ENCODE measurements at regions of chr1 and their contacts with region 1.

Region 1: DNA sequence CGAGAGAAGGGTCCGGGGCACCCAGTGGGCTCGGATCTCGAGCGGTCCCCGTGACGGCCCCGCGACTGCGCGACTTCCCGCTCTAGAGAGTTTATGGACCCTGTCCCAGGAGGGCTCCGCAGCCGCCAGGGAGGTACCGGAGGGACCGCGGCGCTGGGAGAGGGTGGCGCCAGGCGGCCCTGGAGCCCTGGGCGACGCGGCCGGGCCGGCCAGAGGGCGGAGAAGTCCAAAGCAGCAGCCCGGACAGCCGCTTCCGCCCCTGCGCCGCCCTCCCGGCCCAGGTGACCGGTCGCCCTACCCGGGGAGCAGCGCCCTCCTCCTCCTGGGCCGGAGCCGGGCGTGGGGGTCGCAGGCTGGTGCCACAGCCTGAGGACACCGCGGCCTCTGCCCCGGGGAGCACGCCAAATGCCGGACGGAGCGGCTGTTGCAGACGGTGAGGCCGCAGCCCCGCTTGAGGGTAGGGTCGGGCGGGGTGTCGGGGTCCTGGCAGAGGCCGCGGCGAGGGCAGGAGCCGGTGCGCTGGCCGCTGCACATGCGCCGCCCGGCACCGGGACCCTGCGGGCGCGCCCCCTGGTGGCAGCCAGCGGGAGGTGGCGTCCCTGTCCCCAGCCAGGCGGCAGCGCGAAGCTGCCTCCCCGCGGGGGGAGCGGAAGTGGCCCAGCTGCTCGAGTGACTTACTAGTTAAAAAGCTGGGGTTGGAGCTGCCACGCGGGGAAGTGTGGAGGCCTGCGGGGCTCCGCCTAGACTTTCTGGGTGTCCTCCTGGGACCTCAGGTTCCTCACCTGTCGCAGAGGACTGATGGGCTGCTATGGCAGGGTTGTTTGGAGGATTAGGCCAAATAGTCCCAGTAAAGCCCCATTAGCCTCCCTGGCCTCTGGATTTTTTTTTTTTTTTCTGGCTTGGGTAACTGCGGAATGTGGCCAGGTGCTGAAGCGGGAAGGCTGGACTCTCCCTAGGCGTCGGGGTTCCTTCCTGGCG is 20.9 kb upstream of the ZNF678 start:
- DNase-seq: peak; percentile 37 to 93
- H3K4me3 ChIP-seq: peak overlapping the region; percentile 93 to 98
- H3K27ac ChIP-seq: peak overlapping the region; percentile 79 to 85
- H3K4me1 ChIP-seq: peaks cover 4 to 8% of the 10 kb centered on the region in 2 donors
- H3K27me3 ChIP-seq: no peaks in the 10 kb centered on the region
- CTCF ChIP-seq: peak; percentile 82 to 92 (median 82)

Region 2: DNA sequence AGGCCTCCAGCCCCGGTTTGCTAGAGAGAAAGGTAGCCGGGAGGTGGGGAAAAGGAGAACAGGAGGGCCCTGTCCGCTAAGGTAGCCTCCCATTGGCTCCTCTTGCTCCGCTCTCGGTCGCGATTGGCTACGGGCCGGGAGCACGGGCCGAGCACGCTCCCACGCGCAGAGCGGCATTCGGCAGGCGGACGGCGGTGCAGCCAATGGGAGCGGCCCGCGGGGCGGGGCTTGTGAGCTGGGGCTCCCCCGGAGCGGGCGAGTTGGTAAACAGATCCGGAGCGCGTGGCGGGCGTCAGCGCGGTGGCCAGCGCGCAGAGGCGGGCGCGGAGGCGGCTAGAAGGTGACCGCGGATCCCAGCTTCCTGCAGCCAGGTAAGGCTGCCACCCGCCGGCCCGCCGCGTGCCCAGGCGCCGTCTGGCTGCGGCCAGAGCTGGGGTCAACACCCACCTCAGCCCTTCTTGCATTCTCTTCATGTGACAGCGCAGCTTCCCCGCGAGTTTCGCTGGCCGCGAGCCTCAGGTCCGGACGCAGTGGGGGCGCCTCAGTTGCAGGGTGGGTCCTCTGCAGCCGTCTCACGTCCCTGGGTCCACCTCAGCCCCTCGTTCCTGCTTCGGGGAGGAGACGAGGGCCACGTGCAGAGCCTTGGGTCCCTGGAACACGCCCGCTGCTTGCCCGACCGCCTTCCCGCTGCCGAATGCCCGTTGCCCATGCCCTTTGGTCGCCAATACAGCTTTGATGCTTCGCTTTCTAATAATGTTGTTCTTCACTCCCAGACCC is 602.2 kb before region 1 on chr1 and contains the start of gene COQ8A:
- intact Hi-C with region 1: loop called (anchors 5 kb)
- DNase-seq: peak; percentile 96 to 99
- H3K4me3 ChIP-seq: peak within 1 kb of the TSS; percentile 91 to 93
- H3K27ac ChIP-seq: peak within 1 kb of the TSS; percentile 95 to 97
- H3K4me1 ChIP-seq: peaks cover 7 to 21% of the 10 kb centered on the region in 2 donors
- H3K27me3 ChIP-seq: no peaks in the 10 kb centered on the region
- CTCF ChIP-seq: no peak
- total RNA-seq, gene COQ8A: 42.4 TPM

Region 3: DNA sequence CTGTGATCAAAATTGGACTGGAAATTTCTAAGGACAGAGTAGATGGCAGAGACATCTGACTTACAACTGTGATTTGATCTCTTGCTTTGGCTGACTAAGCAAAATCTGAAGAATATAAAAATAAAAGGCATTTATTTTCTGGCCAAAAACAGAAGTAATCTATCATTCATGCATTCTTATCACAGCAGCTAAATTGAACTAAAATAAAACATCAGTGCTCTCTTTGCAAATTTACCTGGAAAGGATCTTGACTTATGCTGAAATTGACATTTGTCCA is 60.5 kb before region 1 on chr1:
- intact Hi-C with region 1: loop called (anchors 5 kb)
- DNase-seq: no peak
- H3K4me3 ChIP-seq: no peak overlapping the region
- H3K27ac ChIP-seq: no peak overlapping the region
- H3K4me1 ChIP-seq: no peaks in the 10 kb centered on the region
- H3K27me3 ChIP-seq: no peaks in the 10 kb centered on the region
- CTCF ChIP-seq: no peak

Region 4: DNA sequence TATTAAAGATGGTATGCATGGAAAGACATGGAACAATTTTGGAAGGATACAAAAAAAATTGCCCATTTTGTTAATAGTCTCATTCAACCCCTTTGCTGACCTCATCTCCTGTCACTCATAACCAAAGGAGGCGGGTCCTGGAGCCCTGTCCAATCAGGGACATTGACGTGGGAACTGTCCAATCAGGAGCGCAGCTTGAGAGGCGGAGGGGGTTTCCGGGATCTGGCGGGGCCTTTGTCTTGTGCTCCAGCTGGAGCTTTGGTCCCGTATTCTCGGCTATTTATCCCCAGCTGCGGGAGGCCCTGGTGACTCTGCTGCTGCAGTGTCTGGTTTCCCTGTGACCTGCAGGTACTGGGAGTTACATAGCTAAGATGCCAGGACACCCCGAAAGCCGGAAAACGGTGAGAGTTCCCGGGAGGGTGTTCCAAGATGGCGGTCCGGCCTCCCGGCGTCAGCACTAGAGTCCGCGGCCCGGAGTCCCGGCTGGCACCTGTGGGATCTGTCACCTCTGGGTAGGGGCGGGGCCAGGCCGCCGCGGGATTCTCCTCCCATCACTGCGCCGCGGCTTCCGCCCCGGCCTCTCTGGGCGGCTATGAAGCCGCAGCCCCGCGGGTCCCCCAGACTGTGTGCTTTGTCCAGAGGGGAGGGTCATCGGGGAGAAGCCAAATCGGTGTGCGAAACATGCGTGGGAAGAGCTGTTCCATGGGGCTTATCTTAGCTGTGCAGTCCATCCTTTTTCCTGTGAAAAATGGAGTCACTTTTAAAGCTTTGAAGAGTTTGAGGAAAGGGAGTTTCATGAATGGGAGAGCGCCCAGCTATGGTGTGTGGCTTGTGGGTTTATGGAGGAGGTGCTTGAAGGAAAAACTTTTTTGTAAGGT is 21.1 kb after region 1 on chr1 and contains the start of gene ZNF678:
- intact Hi-C with region 1: loop called (anchors 1 kb)
- DNase-seq: peak; percentile 78 to 95
- H3K4me3 ChIP-seq: peak within 1 kb of the TSS; percentile 65 to 71
- H3K27ac ChIP-seq: peak within 1 kb of the TSS; percentile 68 to 80
- H3K4me1 ChIP-seq: peaks cover 0 to 6% of the 10 kb centered on the region in 2 donors
- H3K27me3 ChIP-seq: no peaks in the 10 kb centered on the region
- CTCF ChIP-seq: no peak
- total RNA-seq, gene ZNF678: 0.75 TPM

Region 5: DNA sequence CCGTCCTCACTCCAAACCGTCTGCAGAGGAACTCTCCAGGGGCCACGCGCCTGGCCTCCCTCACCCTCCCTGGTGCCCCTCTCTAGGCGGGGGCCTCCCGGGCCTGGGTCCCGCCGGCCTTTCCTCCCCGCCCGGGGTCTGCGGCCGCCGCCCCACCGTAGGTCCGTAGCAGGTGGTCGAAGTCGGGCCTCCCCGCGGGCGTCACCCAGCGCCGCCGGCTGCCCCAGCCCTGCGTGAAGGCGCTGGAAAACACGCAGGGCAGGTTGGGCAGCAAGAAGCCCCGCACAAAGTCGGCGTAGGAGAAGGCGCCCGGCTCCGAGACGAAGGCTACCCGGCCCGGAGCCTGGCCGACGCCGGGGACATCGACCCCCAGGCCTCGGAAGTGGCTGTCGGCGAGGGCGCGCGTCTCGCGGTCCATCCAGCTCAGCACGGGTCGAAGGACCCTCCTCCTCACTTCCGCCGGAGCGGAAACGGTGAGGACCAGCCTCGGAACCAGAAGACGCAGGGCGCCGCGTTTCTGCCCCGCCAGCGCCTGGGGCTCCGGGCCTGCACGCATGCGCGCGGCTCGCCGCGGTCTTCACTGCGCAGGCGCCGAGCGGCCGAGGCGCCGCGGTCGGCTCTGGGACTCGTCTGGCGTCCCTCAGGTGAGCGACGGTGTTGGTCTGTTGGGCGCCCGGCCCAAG is 192.6 kb after region 1 on chr1 and contains the starts of genes JMJD4 and SNAP47:
- intact Hi-C with region 1: loop called (anchors 5 kb)
- DNase-seq: peak in 1 of 2 donors; percentile 95
- H3K4me3 ChIP-seq: peak within 1 kb of the TSS; percentile 81 to 93
- H3K27ac ChIP-seq: peak within 1 kb of the TSS; percentile 84 to 88
- H3K4me1 ChIP-seq: peaks cover 0 to 9% of the 10 kb centered on the region in 2 donors
- H3K27me3 ChIP-seq: no peaks in the 10 kb centered on the region
- CTCF ChIP-seq: no peak
- total RNA-seq, gene JMJD4: 10.6 TPM
- total RNA-seq, gene SNAP47: 54.0 TPM

Measured in ascending aorta (tissue), 2 donors.